Ascending aorta (tissue), 2 donors: ENCODE measurements at regions of chr1 and their contacts with region 1.

Region 1: GRCh38 chr1:184075055-184076029 is 23.8 kb downstream of the TSEN15 start:
- DNase-seq: no peak
- H3K4me3 ChIP-seq: no peak overlapping the region
- H3K27ac ChIP-seq: no peak overlapping the region
- H3K4me1 ChIP-seq: peaks cover 0 to 3% of the 10 kb centered on the region in 2 donors
- H3K27me3 ChIP-seq: no peaks in the 10 kb centered on the region
- CTCF ChIP-seq: peak; percentile 47 to 72 (median 56)

Region 2: GRCh38 chr1:184222652-184223052 is 147.3 kb after region 1 on chr1:
- intact Hi-C with region 1: loop called (anchors 10 kb)
- DNase-seq: no peak
- H3K4me3 ChIP-seq: peak overlapping the region in 1 of 2 donors; percentile 30
- H3K27ac ChIP-seq: no peak overlapping the region
- H3K4me1 ChIP-seq: no peaks in the 10 kb centered on the region
- H3K27me3 ChIP-seq: no peaks in the 10 kb centered on the region
- CTCF ChIP-seq: peak; percentile 60 to 83 (median 79)

Region 3: GRCh38 chr1:184691719-184692324 is 616.5 kb after region 1 on chr1:
- intact Hi-C with region 1: loop called (anchors 1 kb)
- DNase-seq: no peak
- H3K4me3 ChIP-seq: no peak overlapping the region
- H3K27ac ChIP-seq: no peak overlapping the region
- H3K4me1 ChIP-seq: no peaks in the 10 kb centered on the region
- H3K27me3 ChIP-seq: no peaks in the 10 kb centered on the region
- CTCF ChIP-seq: peak; percentile 36 to 74 (median 66)